ENCODE measurements at regions of chr14 and their contacts with region 1.

Region 1: DNA sequence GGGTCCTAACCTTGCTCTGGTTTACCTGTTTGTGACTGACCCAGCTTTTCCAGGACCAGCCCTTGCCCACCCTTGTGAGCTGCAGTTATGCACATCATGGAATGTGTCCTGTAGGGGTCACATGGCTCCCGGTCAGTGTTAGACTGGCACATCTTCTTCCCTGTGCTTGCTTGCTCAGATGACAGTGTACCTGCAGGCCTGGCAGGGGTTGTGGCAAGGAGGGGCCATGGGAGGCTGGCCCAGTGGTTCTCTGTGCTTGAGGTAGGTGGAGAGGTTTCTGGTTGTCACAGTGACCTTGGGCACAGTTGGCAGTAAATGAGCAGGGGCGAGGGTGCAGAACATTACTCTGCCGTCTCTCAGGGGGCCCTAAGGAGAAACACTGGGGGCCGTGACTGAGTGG is 27.6 kb upstream of the RD3L start:
- DNase-seq: no peak
- ATAC-seq: peak in 1 of 2 experiments; percentile 19; a peak in 1 of 6 replicates
- H3K4me3 ChIP-seq: no peak overlapping the region
- H3K27ac ChIP-seq: no peak overlapping the region
- H3K4me1 ChIP-seq: no peaks in the 10 kb centered on the region
- CTCF ChIP-seq: no peak
- EP300 ChIP-seq: no peak
- POLR2A ChIP-seq: no peak
- RAD21 ChIP-seq: no peak

Region 2: DNA sequence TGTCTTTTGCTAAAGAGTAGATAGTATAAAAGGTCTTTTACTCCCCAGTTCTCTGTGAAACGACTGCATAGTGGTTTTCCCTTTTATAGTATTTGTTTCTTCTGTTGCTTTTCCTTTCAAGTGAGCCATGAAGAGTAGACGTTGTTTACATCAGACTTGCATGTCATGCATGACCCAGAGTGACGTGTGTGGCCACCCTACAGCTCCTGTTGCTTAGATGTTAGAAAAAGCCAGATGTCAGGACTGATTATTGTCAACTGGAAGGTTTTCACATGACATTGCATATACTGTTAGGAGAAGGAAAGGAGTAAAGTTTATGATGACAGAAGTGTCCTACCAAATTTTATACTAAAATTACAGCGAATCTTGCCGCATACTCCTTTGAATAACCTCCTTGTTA is 26.3 kb before region 1 on chr14:
- CTCF ChIA-PET with region 1: no interaction called
- POLR2A ChIA-PET with region 1: no interaction called
- DNase-seq: no peak
- ATAC-seq: no peak
- H3K4me3 ChIP-seq: no peak overlapping the region
- H3K27ac ChIP-seq: no peak overlapping the region
- H3K4me1 ChIP-seq: no peaks in the 10 kb centered on the region
- CTCF ChIP-seq: no peak
- EP300 ChIP-seq: no peak
- POLR2A ChIP-seq: no peak
- RAD21 ChIP-seq: no peak

Region 3: DNA sequence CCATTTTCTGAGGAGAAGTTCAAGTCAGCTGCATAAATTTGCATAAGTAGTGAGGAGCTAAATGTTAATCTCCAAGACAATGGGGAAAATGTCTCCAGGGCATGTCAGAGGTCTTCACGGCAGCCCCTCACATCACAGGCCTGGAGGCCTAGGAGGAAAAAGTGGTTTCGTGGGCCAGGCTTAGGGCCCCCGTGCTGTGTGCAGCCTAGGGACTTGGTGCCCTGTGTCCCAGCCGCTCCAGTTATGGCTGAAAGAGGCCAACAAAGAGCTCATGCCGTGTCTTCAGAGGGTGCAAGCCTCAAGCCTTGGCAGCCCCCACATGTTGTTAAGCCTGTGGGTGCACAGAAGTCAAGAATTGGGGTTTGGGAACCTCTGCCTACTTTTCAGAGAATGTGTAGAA is 14.2 kb after region 1 on chr14:
- CTCF ChIA-PET with region 1: interaction called, 17 read pairs
- POLR2A ChIA-PET with region 1: no interaction called
- DNase-seq: no peak
- ATAC-seq: no peak
- H3K4me3 ChIP-seq: no peak overlapping the region
- H3K27ac ChIP-seq: no peak overlapping the region
- H3K4me1 ChIP-seq: no peaks in the 10 kb centered on the region
- CTCF ChIP-seq: no peak
- EP300 ChIP-seq: no peak
- POLR2A ChIP-seq: no peak
- RAD21 ChIP-seq: no peak

Measured in A549 (cell line).